ENCODE measurements at regions of chr10 and their contacts with region 1.

Region 1: DNA sequence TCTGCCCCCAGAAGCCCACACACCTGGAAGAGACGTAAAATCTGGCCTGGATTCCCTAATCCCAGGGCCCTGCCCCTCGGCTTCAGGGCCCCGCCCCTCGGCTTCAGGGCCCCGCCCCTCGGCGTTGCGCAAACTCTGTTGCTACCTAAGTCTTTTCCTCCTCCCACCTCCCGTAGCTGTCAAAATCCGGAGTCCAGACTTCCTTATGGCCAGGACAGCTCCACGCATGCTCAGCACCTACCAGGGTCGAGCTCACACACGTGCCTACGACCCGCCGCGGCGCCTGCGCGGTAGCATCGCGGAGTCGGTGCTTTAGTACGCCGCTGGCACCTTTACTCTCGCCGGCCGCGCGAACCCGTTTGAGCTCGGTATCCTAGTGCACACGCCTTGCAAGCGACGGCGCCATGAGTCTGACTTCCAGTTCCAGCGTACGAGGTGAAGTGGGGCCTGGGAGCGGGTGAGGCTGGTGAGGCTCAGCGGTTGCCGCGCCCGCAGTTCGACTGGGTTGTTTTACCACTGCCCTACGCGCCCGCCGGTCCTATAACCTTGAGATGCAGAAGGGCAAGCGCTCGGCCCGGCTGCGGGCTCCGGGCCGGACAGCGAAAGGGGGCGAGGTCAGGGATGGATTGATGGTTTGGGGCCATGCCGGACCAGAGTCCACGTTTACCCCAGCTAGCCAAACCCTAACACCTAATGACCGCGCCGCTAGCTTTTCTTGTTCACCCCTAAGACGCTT is at the start of gene CISD1:
- DNase-seq: peak; percentile 95
- H3K4me3 Mint-ChIP-seq: peak within 1 kb of the TSS; percentile 96
- H3K27ac Mint-ChIP-seq: peak within 1 kb of the TSS; percentile 93
- H3K4me1 Mint-ChIP-seq: peaks cover 27% of the 10 kb centered on the region
- H3K27me3 Mint-ChIP-seq: no peaks in the 10 kb centered on the region
- total RNA-seq, gene CISD1: 52.7 to 55.0 TPM

Region 2: DNA sequence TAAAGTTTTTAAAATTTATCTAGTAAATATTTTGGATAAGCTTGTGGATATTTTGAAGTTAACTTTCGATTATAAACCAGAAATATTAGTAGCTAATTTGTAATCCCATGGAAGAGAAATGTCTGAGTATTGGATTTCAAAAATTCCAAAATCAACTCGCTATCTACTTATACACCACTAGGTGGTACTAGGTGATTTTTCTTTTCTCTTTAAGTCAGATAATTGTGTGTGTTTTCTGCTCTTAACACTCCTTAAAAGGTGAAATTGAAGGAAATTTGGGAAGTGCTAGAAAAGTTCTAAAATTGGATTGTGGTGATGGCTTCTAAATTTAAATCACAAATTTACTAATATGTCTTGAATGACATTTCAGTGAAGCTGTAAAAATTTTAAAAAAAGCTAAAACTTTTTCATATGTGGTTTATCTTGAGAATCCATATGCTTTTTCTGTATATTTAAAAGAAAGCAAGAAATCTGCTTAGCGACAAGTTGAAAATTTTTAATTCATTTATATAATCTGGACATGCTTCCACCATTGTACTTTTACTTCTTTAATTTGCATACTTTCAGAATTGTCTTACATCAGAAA is 91.6 kb before region 1 on chr10:
- CTCF ChIA-PET with region 1: no interaction called
- intact Hi-C with region 1: no loop called
- DNase-seq: no peak
- H3K4me3 Mint-ChIP-seq: no peak overlapping the region
- H3K27ac Mint-ChIP-seq: no peak overlapping the region
- H3K4me1 Mint-ChIP-seq: no peaks in the 10 kb centered on the region
- H3K27me3 Mint-ChIP-seq: peaks cover 4% of the 10 kb centered on the region

Region 3: GRCh38 chr10:58212622-58213021 is 56.4 kb before region 1 on chr10:
- CTCF ChIA-PET with region 1: no interaction called
- intact Hi-C with region 1: loop called (anchors 1 kb)
- DNase-seq: peak; percentile 13
- H3K4me3 Mint-ChIP-seq: no peak overlapping the region
- H3K27ac Mint-ChIP-seq: peak overlapping the region; percentile 34
- H3K4me1 Mint-ChIP-seq: peaks cover 19% of the 10 kb centered on the region
- H3K27me3 Mint-ChIP-seq: no peaks in the 10 kb centered on the region

Region 4: GRCh38 chr10:58282615-58283014 is 13.6 kb after region 1 on chr10:
- CTCF ChIA-PET with region 1: interaction called, 5 read pairs
- intact Hi-C with region 1: loop called (anchors 1 kb)
- DNase-seq: peak; percentile 68
- H3K4me3 Mint-ChIP-seq: peak overlapping the region; percentile 57
- H3K27ac Mint-ChIP-seq: peak overlapping the region; percentile 91
- H3K4me1 Mint-ChIP-seq: peaks cover 41% of the 10 kb centered on the region
- H3K27me3 Mint-ChIP-seq: no peaks in the 10 kb centered on the region

Region 5: DNA sequence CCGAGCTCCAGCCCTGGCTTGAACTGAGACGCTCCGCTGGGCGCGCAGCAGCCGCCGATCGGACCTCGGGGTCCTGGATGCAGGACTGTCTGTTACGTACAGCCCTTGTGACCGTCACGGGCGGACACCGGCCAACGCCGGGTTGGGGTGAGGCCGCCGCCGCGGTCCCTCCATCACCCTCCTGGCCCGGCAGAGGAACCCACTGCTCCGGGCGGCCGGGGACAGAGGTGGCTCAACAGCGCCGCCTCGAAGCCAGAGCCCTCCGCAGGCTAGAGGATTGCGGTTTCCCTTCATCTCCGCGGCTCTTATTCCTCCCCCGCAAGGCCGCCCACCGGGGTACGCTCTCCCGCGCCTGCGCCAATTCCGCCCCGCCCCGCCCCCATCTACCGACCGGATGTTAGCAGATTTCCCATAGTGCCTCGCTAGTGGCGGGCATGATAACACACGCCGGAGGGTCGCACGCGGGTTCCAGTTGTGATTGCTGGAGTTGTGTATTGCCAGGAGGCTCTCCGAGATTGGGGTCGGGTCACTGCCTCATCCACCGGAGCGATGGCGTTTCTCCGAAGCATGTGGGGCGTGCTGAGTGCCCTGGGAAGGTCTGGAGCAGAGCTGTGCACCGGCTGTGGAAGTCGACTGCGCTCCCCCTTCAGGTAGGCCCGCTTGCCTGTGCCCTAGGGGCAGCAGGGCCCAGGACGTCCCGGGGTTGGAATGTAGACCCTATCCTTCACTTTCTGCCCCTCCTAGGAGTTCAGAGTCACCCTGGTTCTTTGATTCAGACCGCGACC is 116.2 kb after region 1 on chr10 and contains the start of gene TFAM:
- CTCF ChIA-PET with region 1: interaction called, 3 read pairs
- intact Hi-C with region 1: loop called (anchors 1 kb)
- DNase-seq: peak; percentile 98
- H3K4me3 Mint-ChIP-seq: peak within 1 kb of the TSS; percentile 100
- H3K27ac Mint-ChIP-seq: peak within 1 kb of the TSS; percentile 97
- H3K4me1 Mint-ChIP-seq: peaks cover 36% of the 10 kb centered on the region
- H3K27me3 Mint-ChIP-seq: no peaks in the 10 kb centered on the region
- total RNA-seq, gene TFAM: 87.7 to 91.8 TPM

Region 6: DNA sequence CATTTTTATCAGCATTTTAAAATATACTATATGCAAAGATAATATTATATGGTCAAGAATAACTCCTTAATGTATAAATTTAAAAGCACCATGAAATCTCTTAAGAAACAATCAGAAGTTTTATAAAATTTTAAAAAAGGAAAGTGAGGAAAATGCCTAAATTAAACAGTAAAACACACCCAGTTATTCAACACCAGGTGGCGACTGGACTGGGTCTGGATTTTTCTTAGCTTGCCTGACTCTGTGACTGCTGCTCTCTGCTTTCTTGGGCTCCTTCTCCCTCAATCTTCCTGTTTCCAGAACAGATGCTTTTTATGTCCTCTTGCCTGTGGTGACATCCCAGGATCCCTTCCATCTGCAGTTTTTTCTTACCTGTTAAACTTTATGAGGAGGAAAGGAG is 443.9 kb after region 1 on chr10:
- CTCF ChIA-PET with region 1: no interaction called
- intact Hi-C with region 1: no loop called
- DNase-seq: no peak
- H3K4me3 Mint-ChIP-seq: no peak overlapping the region
- H3K27ac Mint-ChIP-seq: no peak overlapping the region
- H3K4me1 Mint-ChIP-seq: no peaks in the 10 kb centered on the region
- H3K27me3 Mint-ChIP-seq: no peaks in the 10 kb centered on the region

Measured in activated naive CD4-positive, alpha-beta T cell treated with anti-CD3 and anti-CD28 coated beads for 36 hours (primary cell).